ENCODE measurements at regions of chr3 and their contacts with region 1.

Region 1: GRCh38 chr3:114299421-114299820 is 5.6 kb downstream of the TIGIT start:
- DNase-seq: peak; percentile 40
- ATAC-seq: peak; percentile 95
- H3K4me3 Mint-ChIP-seq: no peak overlapping the region
- H3K27ac Mint-ChIP-seq: no peak overlapping the region
- H3K4me1 Mint-ChIP-seq: peaks cover 10% of the 10 kb centered on the region
- H3K27me3 Mint-ChIP-seq: no peaks in the 10 kb centered on the region
- CTCF ChIP-seq: no peak

Region 2: GRCh38 chr3:114252954-114253353 is 46.5 kb before region 1 on chr3:
- CTCF ChIA-PET with region 1: no interaction called
- POLR2A ChIA-PET with region 1: no interaction called
- DNase-seq: no peak
- ATAC-seq: no peak
- H3K4me3 Mint-ChIP-seq: no peak overlapping the region
- H3K27ac Mint-ChIP-seq: no peak overlapping the region
- H3K4me1 Mint-ChIP-seq: no peaks in the 10 kb centered on the region
- H3K27me3 Mint-ChIP-seq: no peaks in the 10 kb centered on the region
- CTCF ChIP-seq: no peak

Region 3: GRCh38 chr3:114356066-114356465 is 56.6 kb after region 1 on chr3:
- CTCF ChIA-PET with region 1: interaction called, 12 read pairs
- POLR2A ChIA-PET with region 1: no interaction called
- DNase-seq: peak; percentile 57
- ATAC-seq: peak; percentile 94
- H3K4me3 Mint-ChIP-seq: no peak overlapping the region
- H3K27ac Mint-ChIP-seq: no peak overlapping the region
- H3K4me1 Mint-ChIP-seq: peaks cover 5% of the 10 kb centered on the region
- H3K27me3 Mint-ChIP-seq: no peaks in the 10 kb centered on the region
- CTCF ChIP-seq: no peak

Measured in WTC11 (cell line).